ENCODE measurements at regions of chr3 and their contacts with region 1.

Region 1: DNA sequence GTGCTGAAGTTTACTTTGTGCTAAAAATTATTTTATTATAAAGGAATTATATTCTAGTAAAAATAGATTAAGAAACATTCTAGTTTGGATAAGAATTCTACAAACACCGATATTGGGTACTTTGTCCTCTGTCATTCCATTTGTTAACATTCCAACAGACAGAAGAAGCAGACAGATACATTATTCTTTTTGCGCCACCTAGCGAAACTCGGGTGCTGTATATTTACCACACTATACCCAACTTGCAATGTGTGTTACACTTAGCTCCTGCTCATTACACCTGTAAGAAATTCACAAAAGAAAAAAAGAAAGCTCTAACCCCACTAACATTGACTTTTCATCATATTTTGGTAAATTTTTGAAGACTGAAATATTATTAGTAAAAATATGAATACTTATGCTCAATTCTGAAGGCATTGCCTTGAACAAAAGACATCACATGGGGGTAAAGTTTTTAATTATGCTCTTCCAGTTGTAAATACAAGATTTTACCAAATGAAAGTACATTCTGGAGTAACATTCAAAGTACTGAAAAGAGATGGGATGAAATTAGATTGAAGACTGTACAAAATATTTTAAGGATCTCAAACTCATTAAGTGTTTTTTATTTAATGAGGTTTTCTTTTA is 136.5 kb upstream of the MLF1 start:
- DNase-seq: peak; percentile 52
- ATAC-seq: no peak
- H3K4me3 Mint-ChIP-seq: no peak overlapping the region
- H3K27ac Mint-ChIP-seq: no peak overlapping the region
- H3K4me1 Mint-ChIP-seq: no peaks in the 10 kb centered on the region
- H3K27me3 Mint-ChIP-seq: no peaks in the 10 kb centered on the region
- CTCF ChIP-seq: peak; percentile 58

Region 2: DNA sequence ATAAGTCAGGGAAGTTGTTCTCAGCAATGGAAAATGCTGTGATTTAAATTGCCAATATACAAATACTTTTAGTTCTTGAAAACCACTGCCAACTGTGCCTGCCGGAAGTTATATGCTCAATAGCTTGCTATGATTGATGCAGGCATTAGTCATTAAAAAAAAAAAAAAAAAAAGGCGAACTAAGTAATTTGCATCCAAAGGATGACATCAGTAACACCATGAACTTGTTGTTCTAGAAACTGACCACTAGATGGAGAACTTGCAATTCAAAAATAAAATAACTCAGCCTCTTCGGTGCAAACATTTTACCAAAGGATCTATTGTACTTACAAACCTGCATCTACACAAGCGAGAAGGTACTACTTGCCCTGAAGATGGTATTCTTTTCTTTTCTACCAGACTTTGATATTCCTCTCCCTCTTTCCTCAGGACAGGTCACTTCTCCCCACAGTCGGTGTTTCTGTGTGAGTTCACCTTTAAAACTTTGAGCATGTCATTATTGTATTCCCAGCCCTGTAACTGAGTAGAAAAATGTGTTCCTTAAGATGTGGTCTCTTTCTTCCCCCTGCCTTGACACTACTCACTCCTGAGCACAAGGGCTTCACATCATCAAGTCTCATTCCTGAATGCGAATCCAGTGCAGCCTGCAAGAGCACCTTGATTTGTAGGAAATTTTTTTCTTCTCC is 816.3 kb before region 1 on chr3:
- CTCF ChIA-PET with region 1: interaction called, 4 read pairs
- POLR2A ChIA-PET with region 1: no interaction called
- intact Hi-C with region 1: loop called (anchors 10 kb)
- DNase-seq: peak; percentile 15
- ATAC-seq: peak; percentile 89
- H3K4me3 Mint-ChIP-seq: no peak overlapping the region
- H3K27ac Mint-ChIP-seq: no peak overlapping the region
- H3K4me1 Mint-ChIP-seq: peaks cover 4% of the 10 kb centered on the region
- H3K27me3 Mint-ChIP-seq: peaks cover 6% of the 10 kb centered on the region
- CTCF ChIP-seq: peak; percentile 65

Region 3: DNA sequence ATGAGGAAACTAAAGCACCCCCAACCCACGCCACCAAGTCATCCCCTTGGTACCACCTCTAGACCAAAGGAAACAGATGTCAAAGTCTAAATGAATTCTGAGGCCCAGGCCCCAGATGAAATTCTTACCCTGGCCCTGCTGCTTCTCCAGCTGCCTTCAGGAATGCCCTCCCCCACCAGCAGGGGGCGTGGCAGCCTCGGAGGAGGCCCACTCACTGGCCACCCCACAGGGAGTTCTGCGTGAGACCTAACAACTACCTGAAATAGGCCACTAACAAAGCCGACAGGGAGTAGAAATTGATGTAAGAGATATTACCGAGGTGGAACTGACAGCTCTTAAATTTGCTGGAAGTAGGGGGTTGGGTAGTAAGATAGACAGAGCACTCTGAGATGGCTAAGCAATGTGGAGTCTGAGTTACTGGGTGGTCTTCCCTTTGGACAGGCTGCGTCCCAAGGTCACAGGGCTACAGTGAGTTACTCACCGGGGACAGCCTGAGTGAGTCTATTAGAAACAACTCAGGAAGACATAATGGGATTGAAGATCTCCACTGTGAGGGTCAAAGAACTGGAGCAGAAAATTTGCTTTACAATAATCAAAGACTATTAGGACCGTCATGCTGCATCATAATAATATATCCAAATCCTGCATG is 569.0 kb before region 1 on chr3:
- CTCF ChIA-PET with region 1: interaction called, 15 read pairs
- POLR2A ChIA-PET with region 1: no interaction called
- intact Hi-C with region 1: loop called (anchors 10 kb)
- DNase-seq: peak; percentile 60
- ATAC-seq: no peak
- H3K4me3 Mint-ChIP-seq: no peak overlapping the region
- H3K27ac Mint-ChIP-seq: no peak overlapping the region
- H3K4me1 Mint-ChIP-seq: no peaks in the 10 kb centered on the region
- H3K27me3 Mint-ChIP-seq: no peaks in the 10 kb centered on the region
- CTCF ChIP-seq: peak; percentile 52

Region 4: DNA sequence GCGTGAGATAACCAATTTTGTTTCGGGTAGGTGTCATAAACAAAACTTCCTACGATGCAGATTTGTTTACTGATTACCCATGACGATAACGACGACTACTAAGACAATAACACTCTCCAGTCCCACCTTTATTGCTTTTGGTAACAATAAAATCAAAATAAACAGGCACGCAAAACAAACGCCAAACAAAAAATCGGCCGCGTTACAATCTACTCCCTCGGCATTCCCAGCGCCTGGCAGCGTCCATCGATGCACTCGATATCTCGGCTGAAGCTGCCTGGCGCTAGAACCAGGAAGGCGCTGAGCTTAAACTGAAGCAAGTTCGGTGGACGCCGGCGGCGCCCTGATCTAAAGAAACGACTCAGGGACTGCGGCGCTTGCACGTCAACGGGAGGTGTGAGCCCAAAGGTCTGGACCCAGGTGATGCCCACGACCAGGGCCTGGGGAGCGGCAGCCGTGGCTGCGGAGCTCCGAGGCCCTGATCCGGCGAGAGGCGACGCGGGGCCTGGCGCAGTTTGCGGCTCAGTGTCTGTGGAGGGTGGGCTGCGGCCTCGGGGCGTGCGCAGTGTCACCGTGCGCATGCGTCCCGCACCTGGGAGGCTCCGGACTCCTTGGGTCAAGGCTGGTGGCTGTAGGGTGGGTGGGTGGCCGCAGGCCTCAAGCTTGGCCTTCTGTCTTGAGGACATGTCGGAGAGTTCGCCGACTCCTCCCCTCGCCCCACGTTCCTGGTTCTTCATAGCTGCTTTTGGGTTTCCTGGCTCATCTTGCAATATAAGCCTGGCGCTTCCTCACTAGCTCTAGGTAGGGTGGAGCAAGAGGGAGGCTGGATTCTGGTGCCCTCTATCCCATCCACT is 324.5 kb before region 1 on chr3 and contains the start of gene RSRC1:
- CTCF ChIA-PET with region 1: interaction called, 10 read pairs
- POLR2A ChIA-PET with region 1: no interaction called
- intact Hi-C with region 1: loop called (anchors 10 kb)
- DNase-seq: peak; percentile 87
- ATAC-seq: peak; percentile 88
- H3K4me3 Mint-ChIP-seq: peak within 1 kb of the TSS; percentile 98
- H3K27ac Mint-ChIP-seq: peak within 1 kb of the TSS; percentile 72
- H3K4me1 Mint-ChIP-seq: peaks cover 61% of the 10 kb centered on the region
- H3K27me3 Mint-ChIP-seq: peaks cover 33% of the 10 kb centered on the region
- CTCF ChIP-seq: no peak
- total RNA-seq, gene RSRC1: 37.9 to 44.7 TPM

Region 5: GRCh38 chr3:158279609-158280008 is 154.9 kb before region 1 on chr3:
- CTCF ChIA-PET with region 1: no interaction called
- POLR2A ChIA-PET with region 1: no interaction called
- intact Hi-C with region 1: no loop called
- DNase-seq: no peak
- ATAC-seq: no peak
- H3K4me3 Mint-ChIP-seq: no peak overlapping the region
- H3K27ac Mint-ChIP-seq: no peak overlapping the region
- H3K4me1 Mint-ChIP-seq: no peaks in the 10 kb centered on the region
- H3K27me3 Mint-ChIP-seq: no peaks in the 10 kb centered on the region
- CTCF ChIP-seq: no peak